Activated B cell treated with CpG ODN at 0.5 μM for 24 hours (primary cell): ENCODE measurements at regions of chr3 and their contacts with region 1.

Region 1: GRCh38 chr3:9249273-9250192 is at the start of gene SRGAP3:
- DNase-seq: peak; percentile 60
- ATAC-seq: peak; percentile 100
- H3K4me3 Mint-ChIP-seq: peak within 1 kb of the TSS; percentile 86
- H3K27ac Mint-ChIP-seq: peak within 1 kb of the TSS; percentile 50
- H3K4me1 Mint-ChIP-seq: peaks cover 19% of the 10 kb centered on the region
- H3K27me3 Mint-ChIP-seq: peaks cover 5% of the 10 kb centered on the region
- CTCF ChIP-seq: no peak
- total RNA-seq, gene SRGAP3: 0.20 and 0.58 TPM in 2 replicates

Region 2: GRCh38 chr3:9088441-9089353 is 160.8 kb before region 1 on chr3:
- CTCF ChIA-PET with region 1: no interaction called
- POLR2A ChIA-PET with region 1: no interaction called
- intact Hi-C with region 1: no loop called
- DNase-seq: no peak
- ATAC-seq: no peak
- H3K4me3 Mint-ChIP-seq: no peak overlapping the region
- H3K27ac Mint-ChIP-seq: no peak overlapping the region
- H3K4me1 Mint-ChIP-seq: no peaks in the 10 kb centered on the region
- H3K27me3 Mint-ChIP-seq: no peaks in the 10 kb centered on the region
- CTCF ChIP-seq: no peak

Region 3: DNA sequence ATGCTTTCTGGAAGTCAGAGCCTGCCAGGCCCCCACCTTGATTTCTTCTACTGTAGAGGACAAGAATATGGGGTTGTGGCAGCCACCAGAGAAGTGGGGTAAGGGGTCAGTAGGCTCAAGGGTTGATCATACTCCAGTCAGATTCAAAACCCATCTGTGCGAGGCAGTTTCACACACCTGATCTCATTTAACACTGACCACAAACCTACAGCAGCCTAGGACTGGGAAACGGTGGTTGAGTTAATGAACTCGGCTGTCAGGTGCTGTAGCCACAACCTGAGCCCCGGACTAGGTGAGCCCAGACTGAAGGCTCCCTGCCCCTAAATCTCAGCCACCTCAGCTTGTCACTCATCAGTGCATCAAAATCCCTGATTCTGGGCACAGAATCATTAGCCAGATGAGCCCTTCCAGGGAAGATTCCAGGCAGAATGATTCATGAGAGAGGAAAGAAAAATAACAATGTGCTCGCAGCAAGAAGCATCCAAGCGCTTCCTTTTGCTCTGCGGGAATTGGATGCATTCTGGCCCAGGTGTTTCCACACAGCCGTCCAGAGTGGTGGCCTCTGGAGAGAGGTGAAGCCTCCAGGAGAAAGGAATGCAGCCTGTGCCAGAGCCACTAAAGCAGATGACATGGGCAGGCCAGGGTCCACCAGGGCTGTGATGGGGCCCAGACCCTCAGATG is 102.2 kb before region 1 on chr3:
- CTCF ChIA-PET with region 1: no interaction called
- POLR2A ChIA-PET with region 1: no interaction called
- intact Hi-C with region 1: no loop called
- DNase-seq: no peak
- ATAC-seq: no peak
- H3K4me3 Mint-ChIP-seq: no peak overlapping the region
- H3K27ac Mint-ChIP-seq: no peak overlapping the region
- H3K4me1 Mint-ChIP-seq: peaks cover 5% of the 10 kb centered on the region
- H3K27me3 Mint-ChIP-seq: peaks cover 19% of the 10 kb centered on the region
- CTCF ChIP-seq: no peak

Region 4: GRCh38 chr3:9168241-9168741 is 81.2 kb before region 1 on chr3:
- CTCF ChIA-PET with region 1: no interaction called
- POLR2A ChIA-PET with region 1: no interaction called
- intact Hi-C with region 1: loop called (anchors 1 kb)
- DNase-seq: no peak
- ATAC-seq: peak; percentile 97
- H3K4me3 Mint-ChIP-seq: peak overlapping the region; percentile 5
- H3K27ac Mint-ChIP-seq: peak overlapping the region; percentile 50
- H3K4me1 Mint-ChIP-seq: no peaks in the 10 kb centered on the region
- H3K27me3 Mint-ChIP-seq: no peaks in the 10 kb centered on the region
- CTCF ChIP-seq: no peak